Ovary (tissue), 10 donors: ENCODE measurements at regions of chr3 and their contacts with region 1.

Region 1: DNA sequence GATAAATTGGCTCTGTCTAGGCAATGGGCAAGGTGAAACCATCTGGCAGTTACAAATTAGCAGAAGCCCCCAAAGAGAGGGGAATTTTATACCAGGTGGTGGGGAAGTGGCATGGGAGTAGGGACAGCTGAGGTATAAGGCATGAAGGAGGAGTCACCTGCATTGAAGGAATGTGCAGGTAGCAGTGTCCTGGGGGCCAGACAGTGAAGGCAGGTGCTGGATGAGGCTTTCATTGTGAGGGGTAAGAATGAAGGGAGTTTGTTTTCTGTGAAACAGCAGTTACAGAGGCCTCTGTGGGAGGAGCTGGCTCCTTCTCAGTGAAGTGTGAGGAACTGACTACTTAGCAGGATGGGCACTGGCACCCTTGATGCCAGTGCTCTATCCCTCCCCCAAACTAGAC is 19.1 kb upstream of the PXYLP1 start:
- DNase-seq: no peak
- H3K4me3 ChIP-seq: no peak overlapping the region
- H3K27ac ChIP-seq: no peak overlapping the region
- H3K4me1 ChIP-seq: no peaks in the 10 kb centered on the region
- H3K27me3 ChIP-seq: no peaks in the 10 kb centered on the region
- CTCF ChIP-seq: no peak
- EP300 ChIP-seq: no peak
- POLR2A ChIP-seq: no peak

Region 2: DNA sequence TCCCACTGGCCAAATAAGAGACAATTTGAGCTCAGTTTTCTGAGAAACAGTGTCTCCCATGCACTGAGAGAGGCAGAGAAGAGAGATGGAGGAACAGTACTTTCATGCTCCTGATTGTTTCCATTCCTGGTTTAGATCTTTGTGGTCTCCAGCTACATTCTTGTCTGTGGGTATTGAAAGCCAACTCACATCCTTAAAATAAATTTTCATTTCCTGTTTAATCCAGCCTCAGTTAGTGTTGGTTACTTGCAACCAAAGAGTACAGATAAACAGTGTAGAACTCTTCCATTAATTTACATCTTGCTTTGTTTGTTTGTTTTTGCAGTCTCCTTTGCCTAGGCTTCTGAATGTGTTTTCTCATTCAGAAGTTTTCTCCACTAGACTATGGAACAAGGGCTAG is 1401.2 kb before region 1 on chr3:
- intact Hi-C with region 1: loop called in 1 of 4 experiments (anchors 5 kb)
- DNase-seq: no peak
- H3K4me3 ChIP-seq: no peak overlapping the region
- H3K27ac ChIP-seq: no peak overlapping the region
- H3K4me1 ChIP-seq: peaks cover 3% of the 10 kb centered on the region
- H3K27me3 ChIP-seq: no peaks in the 10 kb centered on the region
- CTCF ChIP-seq: no peak
- EP300 ChIP-seq: no peak
- POLR2A ChIP-seq: no peak